CD8-positive, alpha-beta memory T cell (primary cell): ENCODE measurements at regions of chr19 and their contacts with region 1.

Region 1: GRCh38 chr19:13764101-13764807 is at the start of gene MRI1:
- DNase-seq: peak; percentile 48 to 73 (median 56)
- H3K4me3 ChIP-seq: peak within 1 kb of the TSS; percentile 73
- H3K4me3 Mint-ChIP-seq: peak within 1 kb of the TSS; percentile 82 to 94 (median 90)
- H3K27ac ChIP-seq: peak within 1 kb of the TSS; percentile 57
- H3K27ac Mint-ChIP-seq: peak within 1 kb of the TSS; percentile 84 to 94 (median 90)
- H3K4me1 ChIP-seq: peaks cover 16% of the 10 kb centered on the region
- H3K4me1 Mint-ChIP-seq: peaks cover 18 to 32% (median 20%) of the 10 kb centered on the region in 3 donors
- H3K27me3 ChIP-seq: no peaks in the 10 kb centered on the region
- H3K27me3 Mint-ChIP-seq: no peaks in the 10 kb centered on the region
- total RNA-seq, gene MRI1: 42.4 to 43.5 TPM

Region 2: DNA sequence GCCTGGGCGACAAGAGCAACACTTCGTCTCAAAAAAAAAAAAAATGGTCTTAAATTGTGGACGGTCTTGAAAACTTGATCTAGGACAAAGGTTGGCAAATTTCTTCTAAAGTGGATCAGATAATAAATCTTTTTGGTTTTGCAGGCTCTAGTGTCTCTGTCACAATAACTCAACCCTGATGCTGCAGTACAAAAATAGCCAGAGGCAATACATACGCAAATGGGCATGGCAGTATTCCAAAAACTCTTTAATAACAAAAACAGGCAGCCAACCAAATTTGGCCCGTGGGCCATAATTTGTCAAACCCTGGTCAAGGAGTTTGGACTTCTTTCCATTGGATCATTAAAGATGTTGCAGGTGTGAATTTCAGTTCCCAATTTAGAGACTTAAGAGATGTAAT is 93.4 kb before region 1 on chr19:
- CTCF ChIA-PET with region 1: no interaction called
- POLR2A ChIA-PET with region 1: interaction called, 16 read pairs
- DNase-seq: no peak
- H3K4me3 ChIP-seq: no peak overlapping the region
- H3K4me3 Mint-ChIP-seq: no peak overlapping the region
- H3K27ac ChIP-seq: no peak overlapping the region
- H3K27ac Mint-ChIP-seq: no peak overlapping the region
- H3K4me1 ChIP-seq: no peaks in the 10 kb centered on the region
- H3K4me1 Mint-ChIP-seq: no peaks in the 10 kb centered on the region
- H3K27me3 ChIP-seq: no peaks in the 10 kb centered on the region
- H3K27me3 Mint-ChIP-seq: peaks cover 7 to 11% of the 10 kb centered on the region in 2 donors

Region 3: DNA sequence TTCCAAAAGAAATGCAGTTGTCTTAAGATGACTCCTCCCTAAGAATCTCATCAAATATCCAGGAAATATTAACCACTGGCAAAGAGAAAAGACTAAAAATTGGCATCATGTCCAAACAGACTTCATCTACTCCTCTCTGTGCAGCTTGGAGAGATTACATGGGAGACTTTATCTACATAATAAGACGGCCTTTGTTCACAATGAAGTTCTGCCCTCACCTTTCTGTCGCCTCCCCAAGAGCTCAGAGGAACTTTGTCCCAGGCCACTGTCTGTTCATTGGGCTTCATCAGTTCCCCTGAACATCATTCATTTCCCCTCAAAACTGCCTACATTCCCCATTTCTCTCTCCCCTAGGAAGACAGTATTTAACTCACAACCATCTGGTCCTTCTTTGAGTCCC is 22.4 kb before region 1 on chr19:
- CTCF ChIA-PET with region 1: no interaction called
- POLR2A ChIA-PET with region 1: no interaction called
- DNase-seq: no peak
- H3K4me3 ChIP-seq: no peak overlapping the region
- H3K4me3 Mint-ChIP-seq: peak overlapping the region in 1 of 7 donors; percentile 15
- H3K27ac ChIP-seq: no peak overlapping the region
- H3K27ac Mint-ChIP-seq: no peak overlapping the region
- H3K4me1 ChIP-seq: no peaks in the 10 kb centered on the region
- H3K4me1 Mint-ChIP-seq: peaks cover under 1 to 1% (median 1%) of the 10 kb centered on the region in 3 donors
- H3K27me3 ChIP-seq: no peaks in the 10 kb centered on the region
- H3K27me3 Mint-ChIP-seq: no peaks in the 10 kb centered on the region